ENCODE measurements at regions of chr7 and their contacts with region 1.

Region 1: GRCh38 chr7:123557398-123558288 is at the start of gene NDUFA5:
- DNase-seq: peak; percentile 99
- H3K4me3 Mint-ChIP-seq: no peak within 1 kb of the TSS
- H3K27ac Mint-ChIP-seq: no peak within 1 kb of the TSS
- H3K4me1 Mint-ChIP-seq: peaks cover 5% of the 10 kb centered on the region
- H3K27me3 Mint-ChIP-seq: no peaks in the 10 kb centered on the region
- CTCF ChIP-seq: no peak
- total RNA-seq, gene NDUFA5: 71.9 and 72.8 TPM in 2 replicates

Region 2: DNA sequence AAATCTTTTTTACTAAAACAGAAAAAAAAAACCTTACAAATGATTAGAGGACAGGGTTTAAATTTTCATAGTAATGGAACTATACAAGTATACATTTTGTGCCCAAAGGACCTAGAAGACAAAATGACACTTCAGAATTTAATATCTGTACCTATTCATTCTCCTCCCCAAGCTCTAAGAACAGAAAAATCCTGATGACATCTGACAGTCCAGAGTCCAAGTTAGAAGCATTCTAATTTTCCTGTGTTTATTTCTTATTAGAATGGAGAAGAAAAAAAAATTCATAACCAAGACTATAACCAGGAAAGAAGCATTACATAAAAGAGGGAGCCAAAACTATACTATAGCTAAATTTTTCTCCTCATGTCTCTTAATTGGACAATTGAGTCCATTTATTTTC is 219.0 kb before region 1 on chr7:
- CTCF ChIA-PET with region 1: no interaction called
- POLR2A ChIA-PET with region 1: no interaction called
- intact Hi-C with region 1: no loop called
- DNase-seq: no peak
- H3K4me3 Mint-ChIP-seq: no peak overlapping the region
- H3K27ac Mint-ChIP-seq: no peak overlapping the region
- H3K4me1 Mint-ChIP-seq: no peaks in the 10 kb centered on the region
- H3K27me3 Mint-ChIP-seq: peaks cover 56% of the 10 kb centered on the region
- CTCF ChIP-seq: no peak

Region 3: DNA sequence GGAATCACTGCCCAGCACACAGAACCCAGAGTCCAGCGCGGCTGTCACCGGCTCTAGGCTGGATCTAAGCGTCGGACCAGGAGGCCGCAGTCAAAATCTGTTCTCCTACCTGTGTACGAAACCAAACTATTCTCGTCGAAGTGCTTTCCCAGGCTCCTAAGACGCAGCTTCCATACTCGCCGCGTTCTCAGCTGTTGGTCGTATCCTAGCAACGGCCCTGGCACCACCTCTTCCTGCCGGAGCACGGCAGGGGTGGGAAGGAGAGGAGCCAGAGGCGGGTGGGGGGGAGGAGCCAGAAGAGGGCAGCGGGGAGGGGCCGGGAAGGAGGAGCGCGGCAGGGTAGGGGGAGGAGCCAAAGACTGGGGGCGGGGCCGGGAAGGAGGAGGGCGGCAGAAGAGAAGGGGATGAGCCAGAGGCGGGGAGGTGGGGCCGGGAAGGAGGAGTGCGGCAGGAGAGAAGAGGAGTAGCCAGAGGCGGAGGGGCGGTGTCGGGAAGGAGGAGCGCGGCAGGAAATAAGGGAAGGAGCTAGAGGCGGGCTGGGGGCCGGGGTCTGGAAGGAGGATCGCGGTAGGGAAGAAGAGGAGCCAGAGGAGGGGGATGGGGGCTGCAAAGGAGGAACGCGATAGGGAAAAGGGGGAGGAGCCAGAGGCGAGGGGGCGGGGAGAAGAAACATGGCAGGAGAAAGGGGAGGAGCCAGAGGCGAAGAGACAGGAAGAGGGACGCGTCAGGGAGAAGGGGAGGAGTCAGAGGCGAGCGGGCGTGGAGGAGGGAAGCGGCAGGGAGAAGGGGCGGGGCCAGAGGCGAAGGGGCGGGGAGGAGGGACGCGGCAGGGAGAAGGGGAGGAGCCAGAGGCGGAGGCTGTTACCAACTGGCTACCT is 23.0 kb before region 1 on chr7 and contains the start of gene IQUB:
- CTCF ChIA-PET with region 1: interaction called, 5 read pairs
- POLR2A ChIA-PET with region 1: interaction called, 28 read pairs
- intact Hi-C with region 1: no loop called
- DNase-seq: peak; percentile 98
- H3K4me3 Mint-ChIP-seq: peak within 1 kb of the TSS; percentile 75
- H3K27ac Mint-ChIP-seq: peak within 1 kb of the TSS; percentile 43
- H3K4me1 Mint-ChIP-seq: peaks cover 22% of the 10 kb centered on the region
- H3K27me3 Mint-ChIP-seq: peaks cover 22% of the 10 kb centered on the region
- CTCF ChIP-seq: no peak
- total RNA-seq, gene IQUB: 0.16 and 0.17 TPM in 2 replicates

Region 4: GRCh38 chr7:123570401-123571182 is 12.9 kb after region 1 on chr7:
- CTCF ChIA-PET with region 1: interaction called, 6 read pairs
- POLR2A ChIA-PET with region 1: interaction called, 30 read pairs
- intact Hi-C with region 1: no loop called
- DNase-seq: peak; percentile 51
- H3K4me3 Mint-ChIP-seq: no peak overlapping the region
- H3K27ac Mint-ChIP-seq: no peak overlapping the region
- H3K4me1 Mint-ChIP-seq: no peaks in the 10 kb centered on the region
- H3K27me3 Mint-ChIP-seq: no peaks in the 10 kb centered on the region
- CTCF ChIP-seq: no peak

Region 5: DNA sequence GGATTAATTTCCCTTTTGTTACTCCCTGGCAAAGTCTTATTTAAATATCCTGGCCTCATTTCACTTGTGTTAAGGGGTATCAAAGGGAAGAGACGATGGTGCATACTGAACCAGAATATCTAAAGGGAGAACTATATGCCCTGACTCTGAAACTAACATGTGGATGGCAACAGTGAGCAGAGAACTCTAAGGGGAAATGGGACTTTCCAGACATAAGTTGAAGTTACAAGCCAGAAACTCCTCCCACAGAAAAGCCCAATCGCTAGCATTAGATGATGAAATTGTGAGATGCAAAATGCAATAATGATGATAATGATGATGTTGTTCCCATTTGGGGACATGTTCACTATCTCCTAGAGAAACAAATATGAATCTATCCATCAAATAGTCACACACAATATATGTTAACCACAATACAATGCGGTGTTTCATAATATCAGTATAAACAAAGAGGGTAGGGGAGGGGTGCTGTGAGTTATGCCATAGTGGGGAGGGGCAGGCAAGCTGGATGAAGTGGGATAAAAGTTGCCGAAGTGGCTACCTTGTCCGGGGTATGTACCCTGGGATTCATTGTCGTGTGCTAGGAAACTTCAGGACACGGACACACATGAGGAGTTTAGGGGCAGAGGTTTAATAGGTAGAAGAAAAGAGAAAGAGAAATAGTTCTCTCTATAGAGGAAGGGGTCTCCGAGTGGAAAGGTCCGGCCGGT is 438.1 kb after region 1 on chr7:
- CTCF ChIA-PET with region 1: no interaction called
- POLR2A ChIA-PET with region 1: no interaction called
- intact Hi-C with region 1: no loop called
- DNase-seq: no peak
- H3K4me3 Mint-ChIP-seq: no peak overlapping the region
- H3K27ac Mint-ChIP-seq: no peak overlapping the region
- H3K4me1 Mint-ChIP-seq: peaks cover 12% of the 10 kb centered on the region
- H3K27me3 Mint-ChIP-seq: no peaks in the 10 kb centered on the region
- CTCF ChIP-seq: no peak